CD4-positive, alpha-beta T cell (primary cell): ENCODE measurements at regions of chr17 and their contacts with region 1.

Region 1: DNA sequence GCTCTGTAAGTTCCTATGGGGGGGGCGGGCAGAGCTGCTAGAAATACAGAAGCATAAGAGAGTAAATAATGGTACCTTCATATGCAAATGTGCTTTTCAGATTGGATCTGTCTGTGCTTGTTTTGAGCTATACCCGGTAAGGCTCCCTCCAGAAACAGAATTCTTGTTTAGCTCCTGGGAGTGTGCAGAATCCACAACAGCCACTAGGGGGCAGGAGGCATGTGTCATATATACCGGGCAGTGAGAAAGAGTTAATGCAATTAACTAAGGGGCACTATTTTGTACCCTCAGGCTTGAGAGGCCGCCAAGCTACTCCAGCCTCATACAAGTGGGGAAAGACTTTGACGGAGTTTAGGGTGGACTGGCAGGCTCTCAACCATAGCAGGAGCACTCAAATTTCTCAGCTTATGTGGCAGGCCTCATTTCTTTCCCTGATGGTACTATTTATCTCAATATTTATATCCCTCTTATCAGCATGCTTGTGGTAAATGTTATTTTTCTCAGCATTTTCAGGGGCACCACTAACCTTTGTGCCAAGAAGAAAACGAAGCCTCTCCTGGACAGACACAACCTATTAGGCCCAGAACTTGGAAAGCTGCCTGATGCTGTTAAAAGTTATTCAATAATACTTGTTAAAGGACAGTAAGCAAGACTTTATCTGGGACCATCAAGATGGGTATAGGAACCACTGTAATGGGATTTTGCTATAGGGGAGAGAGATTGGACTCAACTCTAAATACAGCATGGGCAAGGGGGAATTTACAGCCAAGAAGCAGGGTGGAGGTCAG is 10.7 kb upstream of the CENPV start:
- DNase-seq: peak; percentile 57 to 85 (median 66)
- ATAC-seq: peak; percentile 98
- H3K4me3 ChIP-seq: no peak overlapping the region
- H3K4me3 Mint-ChIP-seq: no peak overlapping the region
- H3K27ac ChIP-seq: no peak overlapping the region
- H3K27ac Mint-ChIP-seq: no peak overlapping the region
- H3K4me1 ChIP-seq: peaks cover 4% of the 10 kb centered on the region
- H3K4me1 Mint-ChIP-seq: no peaks in the 10 kb centered on the region
- H3K27me3 ChIP-seq: no peaks in the 10 kb centered on the region
- H3K27me3 Mint-ChIP-seq: no peaks in the 10 kb centered on the region
- CTCF ChIP-seq: peak; percentile 98

Region 2: GRCh38 chr17:16353317-16354174 is 10.4 kb before region 1 on chr17 and contains the start of gene CENPV:
- CTCF ChIA-PET with region 1: interaction called, 26 read pairs
- POLR2A ChIA-PET with region 1: interaction called, 12 read pairs
- intact Hi-C with region 1: no loop called
- DNase-seq: peak; percentile 37 to 88 (median 60)
- ATAC-seq: peak; percentile 85
- H3K4me3 ChIP-seq: peak within 1 kb of the TSS; percentile 73
- H3K4me3 Mint-ChIP-seq: peak within 1 kb of the TSS; percentile 97
- H3K27ac ChIP-seq: peak within 1 kb of the TSS in 1 of 2 donors; percentile 30
- H3K27ac Mint-ChIP-seq: peak within 1 kb of the TSS; percentile 72
- H3K4me1 ChIP-seq: peaks cover 19% of the 10 kb centered on the region
- H3K4me1 Mint-ChIP-seq: peaks cover 17% of the 10 kb centered on the region
- H3K27me3 ChIP-seq: no peaks in the 10 kb centered on the region
- H3K27me3 Mint-ChIP-seq: no peaks in the 10 kb centered on the region
- CTCF ChIP-seq: no peak
- total RNA-seq, gene CENPV: 18.5 to 19.4 TPM

Region 3: DNA sequence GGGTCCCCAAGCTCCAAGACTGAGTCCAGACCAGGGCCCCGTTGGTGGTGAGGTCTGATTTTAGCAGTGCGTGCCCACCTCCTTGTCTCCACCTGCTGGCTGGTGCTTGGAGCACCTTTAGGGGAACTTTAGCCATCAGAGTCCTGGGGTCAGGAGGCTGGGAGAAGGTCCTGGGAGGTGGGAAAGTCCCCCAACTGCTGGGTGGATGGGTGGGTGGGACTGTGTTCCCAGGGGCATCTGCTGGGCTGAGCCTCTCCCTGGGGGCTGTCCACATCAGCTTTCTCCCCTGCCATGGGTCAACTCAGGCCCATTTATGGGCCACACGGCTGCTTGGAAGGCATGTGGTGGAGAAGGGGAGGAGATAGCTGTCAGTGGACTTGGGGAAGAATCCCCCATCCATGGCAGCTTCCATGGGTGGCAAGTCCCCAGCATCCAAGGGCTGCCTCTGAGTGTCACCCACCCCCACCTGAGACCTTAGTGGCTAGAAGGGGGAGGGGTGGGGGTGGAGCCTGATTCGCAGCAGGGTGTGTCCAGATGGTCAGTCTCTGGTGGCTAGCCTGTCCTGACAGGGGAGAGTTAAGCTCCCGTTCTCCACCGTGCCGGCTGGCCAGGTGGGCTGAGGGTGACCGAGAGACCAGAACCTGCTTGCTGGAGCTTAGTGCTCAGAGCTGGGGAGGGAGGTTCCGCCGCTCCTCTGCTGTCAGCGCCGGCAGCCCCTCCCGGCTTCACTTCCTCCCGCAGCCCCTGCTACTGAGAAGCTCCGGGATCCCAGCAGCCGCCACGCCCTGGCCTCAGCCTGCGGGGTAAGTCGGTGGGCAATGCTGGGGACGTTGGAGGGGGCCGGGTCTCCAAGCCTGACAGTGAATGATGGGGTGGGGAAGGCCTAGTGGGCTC is 51.3 kb after region 1 on chr17 and contains the start of gene TRPV2:
- CTCF ChIA-PET with region 1: interaction called, 26 read pairs
- POLR2A ChIA-PET with region 1: interaction called, 15 read pairs
- intact Hi-C with region 1: loop called (anchors 2 to 10 kb)
- DNase-seq: peak; percentile 21 to 72 (median 45)
- ATAC-seq: peak; percentile 49
- H3K4me3 ChIP-seq: peak within 1 kb of the TSS; percentile 96
- H3K4me3 Mint-ChIP-seq: peak within 1 kb of the TSS; percentile 95
- H3K27ac ChIP-seq: peak within 1 kb of the TSS; percentile 90 to 96
- H3K27ac Mint-ChIP-seq: peak within 1 kb of the TSS; percentile 100
- H3K4me1 ChIP-seq: peaks cover 56% of the 10 kb centered on the region
- H3K4me1 Mint-ChIP-seq: peaks cover 47% of the 10 kb centered on the region
- H3K27me3 ChIP-seq: no peaks in the 10 kb centered on the region
- H3K27me3 Mint-ChIP-seq: no peaks in the 10 kb centered on the region
- CTCF ChIP-seq: peak; percentile 55
- total RNA-seq, gene TRPV2: 42.8 to 45.2 TPM

Region 4: GRCh38 chr17:16521070-16521727 is 157.3 kb after region 1 on chr17:
- CTCF ChIA-PET with region 1: interaction called, 16 read pairs
- POLR2A ChIA-PET with region 1: no interaction called
- intact Hi-C with region 1: loop called (anchors 1 to 5 kb)
- DNase-seq: peak; percentile 37 to 86 (median 48)
- ATAC-seq: peak; percentile 86
- H3K4me3 ChIP-seq: no peak overlapping the region
- H3K4me3 Mint-ChIP-seq: no peak overlapping the region
- H3K27ac ChIP-seq: no peak overlapping the region
- H3K27ac Mint-ChIP-seq: no peak overlapping the region
- H3K4me1 ChIP-seq: peaks cover 6% of the 10 kb centered on the region
- H3K4me1 Mint-ChIP-seq: peaks cover 3% of the 10 kb centered on the region
- H3K27me3 ChIP-seq: peaks cover 3 to 8% of the 10 kb centered on the region in 2 experiments
- H3K27me3 Mint-ChIP-seq: peaks cover 50% of the 10 kb centered on the region
- CTCF ChIP-seq: peak; percentile 86